HCT116 (cell line): ENCODE measurements at regions of chr7 and their contacts with region 1.

Region 1: DNA sequence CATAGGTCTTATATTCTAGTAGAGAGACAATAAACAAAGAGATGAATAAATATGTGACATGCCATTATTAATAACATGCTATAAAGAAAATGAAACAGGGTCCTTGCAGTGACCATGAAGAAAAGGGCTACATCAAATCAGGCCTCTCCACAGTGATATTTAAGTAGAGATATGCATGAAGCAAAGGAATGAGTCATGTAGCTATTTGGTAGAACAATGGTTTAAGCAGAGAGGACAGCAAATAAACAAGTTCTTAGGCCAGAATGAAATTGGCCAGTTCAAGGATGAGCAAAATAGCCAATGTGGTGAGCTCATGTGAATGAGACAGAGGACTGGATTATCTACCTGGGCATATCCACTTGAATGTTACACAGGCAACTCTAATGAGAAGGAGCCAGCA is 172.2 kb upstream of the FERD3L start:
- DNase-seq: no peak
- ATAC-seq: no peak
- H3K4me3 ChIP-seq: no peak overlapping the region
- H3K27ac ChIP-seq: no peak overlapping the region
- H3K4me1 ChIP-seq: no peaks in the 10 kb centered on the region
- H3K27me3 ChIP-seq: peaks cover 3% of the 10 kb centered on the region; the same call in 1 of the 2 replicates
- CTCF ChIP-seq: no peak
- POLR2A ChIP-seq: no peak
- RAD21 ChIP-seq: no peak

Region 2: GRCh38 chr7:19248681-19249080 is 68.8 kb before region 1 on chr7:
- CTCF ChIA-PET with region 1: no interaction called
- POLR2A ChIA-PET with region 1: no interaction called
- RAD21 ChIA-PET with region 1: no interaction called
- intact Hi-C with region 1: loop called (anchors 10 kb)
- DNase-seq: no peak
- ATAC-seq: no peak
- H3K4me3 ChIP-seq: no peak overlapping the region
- H3K27ac ChIP-seq: no peak overlapping the region
- H3K4me1 ChIP-seq: no peaks in the 10 kb centered on the region
- H3K27me3 ChIP-seq: no peaks in the 10 kb centered on the region
- CTCF ChIP-seq: no peak
- POLR2A ChIP-seq: no peak
- RAD21 ChIP-seq: no peak

Region 3: DNA sequence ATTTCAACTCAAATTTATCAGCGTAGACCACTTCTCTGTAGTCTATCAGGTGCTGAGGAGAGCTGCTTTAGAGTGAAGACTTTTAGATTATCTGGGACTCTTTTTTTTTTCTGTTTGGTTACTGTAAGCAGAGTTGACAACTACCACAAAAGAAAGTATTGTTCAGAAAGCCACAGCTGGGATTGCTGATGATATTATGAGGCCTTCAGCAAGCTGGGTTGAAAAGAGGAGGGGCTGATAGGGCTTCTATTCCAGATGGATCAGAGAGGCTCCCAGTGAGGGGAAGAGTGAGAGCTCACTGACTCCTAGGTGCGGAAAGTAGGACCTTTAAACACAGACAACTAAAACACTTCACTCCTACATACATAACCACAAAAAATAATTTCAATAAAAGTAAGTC is 16.2 kb after region 1 on chr7:
- CTCF ChIA-PET with region 1: no interaction called
- POLR2A ChIA-PET with region 1: no interaction called
- RAD21 ChIA-PET with region 1: no interaction called
- intact Hi-C with region 1: no loop called
- DNase-seq: no peak
- ATAC-seq: no peak
- H3K4me3 ChIP-seq: no peak overlapping the region
- H3K27ac ChIP-seq: no peak overlapping the region
- H3K4me1 ChIP-seq: no peaks in the 10 kb centered on the region
- H3K27me3 ChIP-seq: no peaks in the 10 kb centered on the region
- CTCF ChIP-seq: no peak
- POLR2A ChIP-seq: no peak
- RAD21 ChIP-seq: no peak

Region 4: DNA sequence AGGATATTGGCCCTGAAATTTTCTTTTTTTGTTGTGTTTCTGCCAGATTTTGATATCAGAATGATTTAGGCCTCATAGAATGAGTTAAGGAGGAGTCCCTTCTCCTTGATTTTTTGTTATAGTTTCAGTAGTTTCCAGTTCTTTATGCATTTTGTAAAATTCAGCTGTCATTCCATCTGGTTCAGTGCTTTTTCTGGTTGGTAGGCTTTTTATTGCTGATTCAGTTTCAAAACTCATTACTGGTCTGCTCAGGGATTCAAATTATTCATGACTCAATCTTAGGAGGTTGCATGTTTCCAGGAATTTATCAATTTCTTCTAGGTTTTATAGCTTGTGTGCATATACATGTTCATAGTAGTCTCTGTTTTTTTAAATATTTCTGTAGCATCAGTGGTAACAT is 466.1 kb after region 1 on chr7:
- CTCF ChIA-PET with region 1: no interaction called
- POLR2A ChIA-PET with region 1: no interaction called
- RAD21 ChIA-PET with region 1: no interaction called
- intact Hi-C with region 1: no loop called
- DNase-seq: no peak
- ATAC-seq: no peak
- H3K4me3 ChIP-seq: no peak overlapping the region
- H3K27ac ChIP-seq: no peak overlapping the region
- H3K4me1 ChIP-seq: no peaks in the 10 kb centered on the region
- H3K27me3 ChIP-seq: no peaks in the 10 kb centered on the region
- CTCF ChIP-seq: no peak
- POLR2A ChIP-seq: no peak
- RAD21 ChIP-seq: no peak